CD8-positive, alpha-beta T cell (primary cell): ENCODE measurements at regions of chr5 and their contacts with region 1.

Region 1: GRCh38 chr5:171387345-171387969 is at the start of gene NPM1:
- DNase-seq: peak; percentile 95 to 100 (median 97)
- ATAC-seq: peak; percentile 88
- H3K4me3 ChIP-seq: peak within 1 kb of the TSS; percentile 92 to 96
- H3K4me3 Mint-ChIP-seq: peak within 1 kb of the TSS; percentile 96
- H3K27ac ChIP-seq: peak within 1 kb of the TSS; percentile 94 to 97
- H3K27ac Mint-ChIP-seq: peak within 1 kb of the TSS; percentile 99
- H3K4me1 ChIP-seq: peaks cover 45% of the 10 kb centered on the region
- H3K4me1 Mint-ChIP-seq: peaks cover 46% of the 10 kb centered on the region
- H3K27me3 ChIP-seq: no peaks in the 10 kb centered on the region
- H3K27me3 Mint-ChIP-seq: peaks cover 3% of the 10 kb centered on the region
- CTCF ChIP-seq: no peak
- total RNA-seq, gene NPM1: 1,297 to 1,299 TPM

Region 2: DNA sequence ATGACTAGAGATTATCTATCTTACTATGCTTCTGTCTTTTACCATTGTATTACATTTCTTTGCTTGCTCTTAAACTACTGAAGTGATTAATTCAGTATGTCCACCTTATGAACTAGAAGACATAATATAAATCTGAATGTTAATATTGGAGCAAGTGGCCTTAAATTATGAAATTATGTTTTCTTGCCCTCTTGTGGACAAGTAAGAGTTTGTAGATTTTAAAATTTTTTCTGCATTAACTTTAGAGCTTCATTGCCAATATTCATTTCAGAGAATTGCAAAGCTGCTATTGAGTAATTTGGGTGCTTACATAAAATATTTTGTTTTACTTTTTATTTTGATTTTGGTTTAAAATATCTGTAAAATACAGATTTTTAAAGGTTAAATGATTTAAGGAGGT is 470.3 kb before region 1 on chr5:
- CTCF ChIA-PET with region 1: no interaction called
- POLR2A ChIA-PET with region 1: no interaction called
- intact Hi-C with region 1: no loop called
- DNase-seq: no peak
- ATAC-seq: no peak
- H3K4me3 ChIP-seq: no peak overlapping the region
- H3K4me3 Mint-ChIP-seq: no peak overlapping the region
- H3K27ac ChIP-seq: no peak overlapping the region
- H3K27ac Mint-ChIP-seq: no peak overlapping the region
- H3K4me1 ChIP-seq: no peaks in the 10 kb centered on the region
- H3K4me1 Mint-ChIP-seq: no peaks in the 10 kb centered on the region
- H3K27me3 ChIP-seq: no peaks in the 10 kb centered on the region
- H3K27me3 Mint-ChIP-seq: no peaks in the 10 kb centered on the region
- CTCF ChIP-seq: no peak

Region 3: DNA sequence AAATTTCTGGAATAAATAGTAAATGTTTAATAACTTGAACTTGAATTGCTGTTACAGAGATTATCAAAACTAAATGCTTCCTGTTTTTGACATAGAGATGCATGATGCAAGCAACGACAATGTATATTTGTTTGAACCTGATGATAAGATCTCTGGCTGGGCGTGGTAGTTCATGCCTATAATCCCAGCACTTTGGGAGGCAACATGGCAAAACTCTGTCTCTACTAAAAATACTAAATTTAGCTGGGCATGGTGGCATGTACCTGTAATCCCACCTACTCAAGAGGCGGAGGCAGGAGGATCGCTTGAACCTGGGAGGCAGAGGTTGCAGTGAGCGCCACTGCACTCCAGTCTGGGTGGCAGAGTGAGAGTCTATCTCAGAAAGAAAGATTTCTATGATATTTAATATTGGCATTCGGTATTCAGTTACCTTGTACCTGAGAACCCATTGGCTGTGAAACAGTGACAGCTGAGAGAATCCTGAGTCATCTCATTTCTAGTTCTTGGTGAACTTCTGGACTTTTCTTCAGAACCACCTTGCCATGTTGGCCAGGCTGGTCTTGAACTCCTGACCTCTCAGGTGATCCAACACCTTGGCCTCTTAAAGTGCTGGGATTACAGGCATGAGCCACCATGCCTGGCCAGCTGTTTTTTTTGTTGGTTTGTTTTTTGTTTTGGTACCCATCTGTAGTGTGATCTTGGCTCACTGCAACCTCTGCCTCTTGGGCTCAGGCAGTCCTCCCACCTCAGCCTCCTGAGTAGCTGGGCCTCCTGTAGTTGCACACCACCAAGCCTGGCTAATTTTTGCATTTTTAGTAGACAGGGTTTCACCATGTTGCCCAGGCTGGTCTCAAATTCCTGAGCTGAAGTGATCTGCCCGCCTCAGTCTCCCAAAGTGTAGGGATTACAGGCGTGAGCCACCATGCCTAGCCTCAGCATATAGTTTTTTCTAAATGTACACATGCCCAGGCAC is 22.0 kb after region 1 on chr5:
- CTCF ChIA-PET with region 1: no interaction called
- POLR2A ChIA-PET with region 1: interaction called, 4 read pairs
- intact Hi-C with region 1: loop called in 1 of 2 experiments (anchors 2 kb)
- DNase-seq: no peak
- ATAC-seq: no peak
- H3K4me3 ChIP-seq: no peak overlapping the region
- H3K4me3 Mint-ChIP-seq: no peak overlapping the region
- H3K27ac ChIP-seq: no peak overlapping the region
- H3K27ac Mint-ChIP-seq: no peak overlapping the region
- H3K4me1 ChIP-seq: no peaks in the 10 kb centered on the region
- H3K4me1 Mint-ChIP-seq: peaks cover 35% of the 10 kb centered on the region
- H3K27me3 ChIP-seq: no peaks in the 10 kb centered on the region
- H3K27me3 Mint-ChIP-seq: no peaks in the 10 kb centered on the region
- CTCF ChIP-seq: no peak

Region 4: DNA sequence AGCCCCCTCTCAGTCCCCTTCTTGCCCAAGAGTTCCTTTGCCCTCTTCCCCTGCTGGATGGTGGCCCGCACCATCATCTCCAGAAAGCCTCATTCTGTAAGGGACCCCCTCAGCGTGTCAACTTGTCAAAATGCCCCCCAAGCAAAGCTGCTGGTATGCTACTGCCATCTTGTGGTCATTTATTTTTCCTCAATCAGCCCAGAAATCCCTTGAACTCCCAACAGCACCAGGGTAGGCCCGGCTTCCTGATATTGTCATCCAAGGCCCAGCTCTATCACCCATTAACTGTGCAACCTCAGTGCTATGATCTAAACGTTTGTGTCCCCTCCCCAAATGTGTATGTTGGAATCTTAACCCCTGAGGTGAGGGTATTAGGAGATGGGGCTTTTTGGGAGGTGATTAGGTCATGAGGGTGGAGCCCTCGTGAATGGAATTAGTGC is 672.2 kb after region 1 on chr5:
- CTCF ChIA-PET with region 1: no interaction called
- POLR2A ChIA-PET with region 1: no interaction called
- intact Hi-C with region 1: loop called in 1 of 2 experiments (anchors 10 kb)
- DNase-seq: peak in 2 of 9 experiments; percentile 39 to 54
- ATAC-seq: no peak
- H3K4me3 ChIP-seq: no peak overlapping the region
- H3K4me3 Mint-ChIP-seq: no peak overlapping the region
- H3K27ac ChIP-seq: no peak overlapping the region
- H3K27ac Mint-ChIP-seq: peak overlapping the region; percentile 61
- H3K4me1 ChIP-seq: peaks cover 9% of the 10 kb centered on the region
- H3K4me1 Mint-ChIP-seq: peaks cover 30% of the 10 kb centered on the region
- H3K27me3 ChIP-seq: no peaks in the 10 kb centered on the region
- H3K27me3 Mint-ChIP-seq: no peaks in the 10 kb centered on the region
- CTCF ChIP-seq: peak; percentile 43

Region 5: GRCh38 chr5:172283020-172283861 is 895.8 kb after region 1 on chr5 and contains the start of gene UBTD2:
- CTCF ChIA-PET with region 1: no interaction called
- POLR2A ChIA-PET with region 1: no interaction called
- intact Hi-C with region 1: loop called (anchors 2 to 10 kb)
- DNase-seq: peak; percentile 44 to 85 (median 70)
- ATAC-seq: peak; percentile 76
- H3K4me3 ChIP-seq: peak within 1 kb of the TSS; percentile 76 to 78
- H3K4me3 Mint-ChIP-seq: peak within 1 kb of the TSS; percentile 88
- H3K27ac ChIP-seq: no peak within 1 kb of the TSS
- H3K27ac Mint-ChIP-seq: peak within 1 kb of the TSS; percentile 77
- H3K4me1 ChIP-seq: peaks cover 18% of the 10 kb centered on the region
- H3K4me1 Mint-ChIP-seq: peaks cover 26% of the 10 kb centered on the region
- H3K27me3 ChIP-seq: no peaks in the 10 kb centered on the region
- H3K27me3 Mint-ChIP-seq: no peaks in the 10 kb centered on the region
- CTCF ChIP-seq: peak; percentile 61
- total RNA-seq, gene UBTD2: 0.78 to 0.79 TPM